CD14-positive monocyte (primary cell): ENCODE measurements at regions of chrX and their contacts with region 1.

Region 1: DNA sequence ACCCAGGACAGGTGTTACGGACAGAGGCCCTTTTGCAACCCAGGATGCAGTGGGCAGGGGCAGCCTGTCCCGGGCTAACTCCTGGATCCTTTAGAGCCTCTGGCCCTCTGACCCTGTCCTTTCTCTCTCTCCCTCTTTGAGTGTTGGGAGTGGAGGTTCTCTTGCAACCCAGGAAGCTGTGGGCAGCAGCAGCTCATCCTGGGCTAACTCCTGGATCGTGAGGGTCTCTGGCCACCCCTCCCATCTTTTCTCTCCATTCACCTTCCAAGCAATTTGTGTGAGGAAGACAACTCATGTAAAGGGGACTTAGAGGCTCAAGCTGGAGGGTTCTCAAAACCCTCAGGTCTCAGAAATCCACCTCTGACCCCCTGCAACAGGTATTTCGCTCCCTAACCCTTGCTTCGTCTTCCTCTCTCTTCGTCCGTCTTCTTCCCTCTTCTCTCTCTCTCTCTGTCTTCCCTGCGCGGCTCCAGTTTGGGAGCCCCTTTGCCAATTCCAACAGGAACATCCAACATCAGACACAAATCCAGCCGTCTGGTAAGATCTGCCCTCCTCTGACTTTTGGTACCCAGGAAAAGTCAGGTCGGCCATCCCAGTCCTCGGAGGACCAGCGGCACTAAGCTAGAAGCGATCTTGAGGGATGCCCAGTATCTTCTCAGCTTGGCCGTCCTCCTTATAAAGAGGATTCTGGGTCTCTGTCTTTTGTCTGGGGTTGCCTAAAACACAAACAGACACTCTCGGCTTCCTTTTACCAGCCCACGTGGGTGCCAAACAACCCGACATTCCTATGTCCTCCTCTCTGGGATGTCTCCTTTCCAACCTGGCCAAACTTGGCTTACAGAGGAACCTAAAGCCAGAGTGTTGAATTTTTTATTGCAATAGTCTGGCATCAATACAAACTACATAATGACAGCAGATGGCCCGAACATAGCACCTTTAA is 7.9 kb downstream of the ASMTL start:
- DNase-seq: no peak
- H3K4me3 ChIP-seq: no peak overlapping the region
- H3K4me3 Mint-ChIP-seq: no peak overlapping the region
- H3K27ac ChIP-seq: no peak overlapping the region
- H3K27ac Mint-ChIP-seq: no peak overlapping the region
- H3K4me1 ChIP-seq: no peaks in the 10 kb centered on the region
- H3K4me1 Mint-ChIP-seq: peaks cover 5% of the 10 kb centered on the region
- H3K27me3 ChIP-seq: no peaks in the 10 kb centered on the region
- H3K27me3 Mint-ChIP-seq: peaks cover 0 to 7% (median 2%) of the 10 kb centered on the region in 3 donors
- CTCF ChIP-seq: no peak

Region 2: DNA sequence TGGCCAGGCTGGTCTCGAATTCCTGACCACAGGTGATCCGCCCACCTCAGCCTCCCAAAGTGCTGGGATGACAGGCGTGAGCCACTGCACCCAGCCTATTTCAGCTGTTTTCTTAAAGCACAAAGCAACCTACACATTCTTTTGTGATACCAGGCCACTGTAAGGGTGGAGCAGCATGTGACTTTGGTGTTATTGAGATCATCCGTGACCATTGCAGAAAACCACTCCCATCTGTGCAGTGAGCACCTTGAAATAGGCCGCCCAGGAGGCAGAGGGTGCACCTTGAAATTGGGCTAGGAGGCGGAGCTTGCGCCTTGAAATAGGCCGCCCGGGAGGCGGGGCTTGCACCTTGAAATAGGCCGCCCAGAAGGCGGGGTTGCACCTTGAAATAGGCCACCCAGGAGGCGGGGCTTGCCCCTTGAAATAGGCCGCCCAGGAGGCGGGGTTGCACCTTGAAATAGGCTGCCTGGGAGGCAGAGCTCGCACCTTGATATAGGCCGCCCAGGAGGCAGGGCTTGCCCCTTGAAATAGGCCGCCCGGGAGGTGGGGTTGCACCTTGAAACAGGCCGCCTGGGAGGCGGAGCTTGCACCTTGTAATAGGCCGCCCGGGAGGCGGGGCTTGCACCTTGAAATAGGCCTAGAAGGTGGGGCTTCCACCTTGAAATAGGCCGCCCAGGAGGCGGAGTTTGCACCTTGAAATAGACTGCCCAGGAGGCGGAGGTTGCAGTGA is 43.9 kb before region 1 on chrX:
- intact Hi-C with region 1: loop called in 1 of 2 experiments (anchors 5 kb)
- DNase-seq: no peak
- H3K4me3 ChIP-seq: no peak overlapping the region
- H3K4me3 Mint-ChIP-seq: no peak overlapping the region
- H3K27ac ChIP-seq: no peak overlapping the region
- H3K27ac Mint-ChIP-seq: no peak overlapping the region
- H3K4me1 ChIP-seq: no peaks in the 10 kb centered on the region
- H3K4me1 Mint-ChIP-seq: no peaks in the 10 kb centered on the region
- H3K27me3 ChIP-seq: no peaks in the 10 kb centered on the region
- H3K27me3 Mint-ChIP-seq: no peaks in the 10 kb centered on the region
- CTCF ChIP-seq: no peak